ENCODE measurements at regions of chrX and their contacts with region 1.

Region 1: DNA sequence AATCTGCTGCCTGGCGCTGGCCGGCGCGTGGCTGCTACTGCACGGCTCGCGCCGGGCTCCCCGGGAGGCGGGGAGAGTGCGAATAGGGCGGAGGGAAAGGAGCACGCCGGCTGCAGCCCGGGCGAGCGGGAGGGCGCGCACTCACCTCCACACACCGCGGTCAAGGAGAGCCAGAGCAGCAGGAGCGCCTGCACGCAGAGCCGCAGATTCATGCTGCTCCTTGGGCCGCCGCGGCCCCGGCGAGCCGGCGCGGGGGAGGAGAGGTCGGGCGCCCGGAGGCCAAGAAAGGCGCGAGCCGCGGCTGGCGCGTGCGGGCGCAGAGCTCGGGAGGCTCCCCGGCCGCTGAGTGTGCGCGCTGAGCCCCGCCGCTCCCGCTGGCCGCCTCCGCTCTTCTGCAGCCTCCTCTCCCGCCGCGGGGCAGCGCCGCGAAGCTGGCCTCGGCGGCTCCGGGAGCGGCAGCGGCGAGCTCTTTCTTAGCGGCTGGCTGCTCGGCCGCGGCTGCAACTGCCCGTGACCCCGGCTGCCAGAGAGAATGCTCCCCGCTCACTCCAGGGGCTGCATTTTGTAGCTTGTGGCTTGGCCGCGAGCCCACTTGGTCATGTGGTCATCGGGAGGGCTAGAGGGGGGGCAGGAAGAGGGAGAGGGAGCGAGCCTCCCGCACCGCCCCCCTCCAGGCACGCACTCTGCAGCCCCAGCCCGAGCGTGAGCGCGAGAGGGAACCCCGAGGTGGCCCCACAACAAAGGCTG is at the start of gene APLN:
- DNase-seq: peak; percentile 77 to 84
- ATAC-seq: peak; percentile 56
- H3K4me3 ChIP-seq: peak within 1 kb of the TSS in 1 of 2 donors; percentile 38
- H3K27ac ChIP-seq: no peak within 1 kb of the TSS
- H3K4me1 ChIP-seq: no peaks in the 10 kb centered on the region
- H3K27me3 ChIP-seq: no peaks in the 10 kb centered on the region
- total RNA-seq, gene APLN: 11.0 to 24.0 TPM

Region 2: DNA sequence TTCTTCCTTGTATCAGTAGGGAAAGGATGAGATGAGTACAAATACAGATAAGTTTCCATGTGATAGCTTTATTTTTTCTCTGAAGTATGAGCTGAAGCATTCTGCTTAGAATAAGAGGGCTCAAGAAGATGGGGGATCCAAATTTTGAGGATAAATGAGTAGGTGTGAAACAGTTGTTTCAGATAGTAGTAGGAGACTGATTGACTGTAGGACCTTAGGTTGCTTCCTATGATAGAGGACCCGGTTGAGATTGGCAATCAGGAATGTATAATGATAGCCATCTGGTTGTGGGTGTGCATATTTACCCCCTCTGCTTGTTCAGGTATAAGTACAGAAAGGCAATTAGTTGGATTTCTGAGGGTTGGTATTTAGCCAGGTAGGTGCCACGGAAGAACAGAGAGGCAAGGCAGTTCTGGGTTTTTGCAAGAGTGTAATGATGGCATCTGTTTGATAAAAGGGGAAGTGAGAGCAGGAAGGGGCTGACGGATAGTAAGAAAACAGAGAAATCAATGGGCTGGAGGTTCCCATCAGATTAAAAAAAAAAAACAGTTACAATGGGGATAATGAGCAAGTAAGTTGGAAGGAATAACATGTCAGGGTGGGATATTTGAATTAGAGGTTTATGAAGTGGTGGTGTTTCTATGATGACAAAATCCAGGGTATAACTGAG is 100.8 kb before region 1 on chrX:
- intact Hi-C with region 1: no loop called
- DNase-seq: no peak
- ATAC-seq: no peak
- H3K4me3 ChIP-seq: no peak overlapping the region
- H3K27ac ChIP-seq: no peak overlapping the region
- H3K4me1 ChIP-seq: no peaks in the 10 kb centered on the region
- H3K27me3 ChIP-seq: no peaks in the 10 kb centered on the region

Region 3: GRCh38 chrX:129706400-129707072 is 51.9 kb after region 1 on chrX:
- intact Hi-C with region 1: loop called in 1 of 2 experiments (anchors 10 kb)
- DNase-seq: peak in 1 of 2 donors; percentile 70
- ATAC-seq: peak; percentile 47
- H3K4me3 ChIP-seq: no peak overlapping the region
- H3K27ac ChIP-seq: peak overlapping the region in 1 of 2 donors; percentile 23
- H3K4me1 ChIP-seq: no peaks in the 10 kb centered on the region
- H3K27me3 ChIP-seq: no peaks in the 10 kb centered on the region

Region 4: GRCh38 chrX:129748305-129748704 is 93.7 kb after region 1 on chrX:
- intact Hi-C with region 1: no loop called
- DNase-seq: no peak
- ATAC-seq: peak; percentile 80
- H3K4me3 ChIP-seq: no peak overlapping the region
- H3K27ac ChIP-seq: no peak overlapping the region
- H3K4me1 ChIP-seq: peaks cover 0 to 1% of the 10 kb centered on the region in 2 donors
- H3K27me3 ChIP-seq: no peaks in the 10 kb centered on the region